A549 (cell line): ENCODE measurements at regions of chr22 and their contacts with region 1.

Region 1: DNA sequence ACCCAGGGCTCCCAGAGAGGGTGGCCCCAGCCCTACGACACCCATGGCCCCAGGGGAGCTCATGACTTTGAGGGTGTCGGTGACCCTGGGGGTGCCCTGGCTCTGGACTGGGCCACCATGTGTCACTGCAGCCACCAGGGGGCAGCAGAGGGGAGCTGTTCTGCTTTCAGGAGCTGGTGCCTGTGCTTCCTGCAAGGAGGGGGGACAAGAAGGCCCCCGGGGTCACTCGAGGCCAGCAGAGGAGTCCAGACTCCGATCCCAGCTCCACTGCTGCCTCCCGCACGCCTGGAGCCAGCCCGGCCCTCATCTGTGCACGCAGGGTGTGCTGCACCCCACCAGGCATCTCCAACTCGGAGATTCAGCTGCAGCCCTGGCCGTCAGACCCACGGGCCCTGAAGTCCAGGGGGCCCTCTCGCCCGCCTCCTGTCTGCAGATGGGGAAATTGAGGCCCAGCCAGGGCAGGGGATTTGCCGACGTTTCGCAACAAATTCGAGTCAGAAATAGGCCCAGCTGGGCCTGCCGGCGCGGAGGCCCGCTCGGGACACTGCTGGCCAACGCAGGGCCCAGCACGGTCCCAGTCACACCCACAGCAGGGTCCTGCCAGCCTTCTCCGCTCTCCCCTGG is 29.5 kb upstream of the WNT7B start:
- DNase-seq: peak; percentile 80 to 85
- ATAC-seq: peak; percentile 71 to 89
- H3K4me3 ChIP-seq: peak overlapping the region; percentile 35
- H3K27ac ChIP-seq: peak overlapping the region; percentile 94 to 99
- H3K4me1 ChIP-seq: peaks cover 31% of the 10 kb centered on the region
- CTCF ChIP-seq: peak; percentile 79
- EP300 ChIP-seq: no peak
- POLR2A ChIP-seq: no peak
- RAD21 ChIP-seq: peak; percentile 79 to 80

Region 2: GRCh38 chr22:46019351-46019750 is 12.9 kb after region 1 on chr22:
- CTCF ChIA-PET with region 1: interaction called, 38 read pairs
- POLR2A ChIA-PET with region 1: interaction called, 9 read pairs
- DNase-seq: peak in 1 of 2 experiments; percentile 38
- ATAC-seq: no peak
- H3K4me3 ChIP-seq: no peak overlapping the region
- H3K27ac ChIP-seq: peak overlapping the region; percentile 69 to 77
- H3K4me1 ChIP-seq: peaks cover 41% of the 10 kb centered on the region
- CTCF ChIP-seq: no peak
- EP300 ChIP-seq: no peak
- POLR2A ChIP-seq: no peak
- RAD21 ChIP-seq: no peak

Region 3: GRCh38 chr22:46047841-46048595 is 41.5 kb after region 1 on chr22:
- CTCF ChIA-PET with region 1: interaction called, 48 read pairs
- POLR2A ChIA-PET with region 1: no interaction called
- DNase-seq: no peak
- ATAC-seq: no peak
- H3K4me3 ChIP-seq: no peak overlapping the region
- H3K27ac ChIP-seq: no peak overlapping the region
- H3K4me1 ChIP-seq: peaks cover 12% of the 10 kb centered on the region
- CTCF ChIP-seq: no peak
- EP300 ChIP-seq: no peak
- POLR2A ChIP-seq: no peak
- RAD21 ChIP-seq: no peak

Region 4: DNA sequence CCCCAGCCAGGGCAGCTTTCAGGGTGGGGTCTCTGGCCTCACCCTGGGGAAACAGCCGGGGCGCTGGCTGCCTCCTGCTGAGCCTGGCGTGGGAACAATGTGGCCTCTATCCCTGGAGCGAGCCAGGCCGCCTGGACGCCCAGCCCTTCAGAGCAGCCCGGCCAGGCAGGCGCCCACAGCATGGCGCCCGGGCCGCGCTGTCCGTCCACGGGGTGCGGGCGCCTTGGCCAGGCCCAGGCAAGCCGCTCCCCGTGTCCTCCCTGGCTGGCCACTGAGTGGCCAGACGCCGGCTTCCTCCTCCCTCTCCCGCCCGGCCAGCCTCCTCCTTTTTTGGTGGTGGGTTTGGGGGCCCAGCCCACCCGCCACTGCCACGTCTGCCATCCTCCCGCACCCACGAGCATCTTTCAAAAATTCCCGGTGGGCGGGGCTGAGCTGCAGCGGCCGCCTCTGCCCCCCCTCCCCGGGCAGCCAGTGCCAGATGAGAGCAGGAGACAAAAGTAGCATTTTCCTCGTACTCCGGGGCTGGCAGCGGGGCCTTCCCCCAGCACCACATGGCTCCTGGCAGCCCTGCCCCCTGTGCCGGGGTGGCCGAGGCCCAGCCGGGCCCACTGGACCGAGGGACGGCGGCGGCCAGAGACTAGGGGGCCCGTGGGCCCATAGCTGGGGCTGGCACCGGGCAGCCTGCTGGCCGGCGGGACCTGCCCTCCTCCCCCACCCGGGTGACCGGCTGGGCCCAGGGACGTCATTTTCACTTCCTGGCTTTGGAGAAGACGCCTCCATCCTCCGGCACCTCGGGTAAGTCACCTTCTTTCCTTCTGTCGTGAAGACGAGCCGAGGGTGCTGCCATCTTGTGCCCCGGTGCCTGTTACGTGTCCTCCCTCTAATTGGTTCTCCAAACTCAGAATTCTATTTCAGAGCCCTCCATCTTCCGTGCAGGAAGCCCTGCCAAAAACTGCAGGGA is 73.7 kb after region 1 on chr22:
- CTCF ChIA-PET with region 1: interaction called, 18 read pairs
- POLR2A ChIA-PET with region 1: interaction called, 4 read pairs
- DNase-seq: peak in 1 of 2 experiments; percentile 93
- ATAC-seq: peak; percentile 64 to 71
- H3K4me3 ChIP-seq: peak overlapping the region; percentile 52
- H3K27ac ChIP-seq: peak overlapping the region; percentile 99 to 100
- H3K4me1 ChIP-seq: peaks cover 54% of the 10 kb centered on the region
- CTCF ChIP-seq: no peak
- EP300 ChIP-seq: no peak
- POLR2A ChIP-seq: peak; percentile 30
- RAD21 ChIP-seq: no peak

Region 5: DNA sequence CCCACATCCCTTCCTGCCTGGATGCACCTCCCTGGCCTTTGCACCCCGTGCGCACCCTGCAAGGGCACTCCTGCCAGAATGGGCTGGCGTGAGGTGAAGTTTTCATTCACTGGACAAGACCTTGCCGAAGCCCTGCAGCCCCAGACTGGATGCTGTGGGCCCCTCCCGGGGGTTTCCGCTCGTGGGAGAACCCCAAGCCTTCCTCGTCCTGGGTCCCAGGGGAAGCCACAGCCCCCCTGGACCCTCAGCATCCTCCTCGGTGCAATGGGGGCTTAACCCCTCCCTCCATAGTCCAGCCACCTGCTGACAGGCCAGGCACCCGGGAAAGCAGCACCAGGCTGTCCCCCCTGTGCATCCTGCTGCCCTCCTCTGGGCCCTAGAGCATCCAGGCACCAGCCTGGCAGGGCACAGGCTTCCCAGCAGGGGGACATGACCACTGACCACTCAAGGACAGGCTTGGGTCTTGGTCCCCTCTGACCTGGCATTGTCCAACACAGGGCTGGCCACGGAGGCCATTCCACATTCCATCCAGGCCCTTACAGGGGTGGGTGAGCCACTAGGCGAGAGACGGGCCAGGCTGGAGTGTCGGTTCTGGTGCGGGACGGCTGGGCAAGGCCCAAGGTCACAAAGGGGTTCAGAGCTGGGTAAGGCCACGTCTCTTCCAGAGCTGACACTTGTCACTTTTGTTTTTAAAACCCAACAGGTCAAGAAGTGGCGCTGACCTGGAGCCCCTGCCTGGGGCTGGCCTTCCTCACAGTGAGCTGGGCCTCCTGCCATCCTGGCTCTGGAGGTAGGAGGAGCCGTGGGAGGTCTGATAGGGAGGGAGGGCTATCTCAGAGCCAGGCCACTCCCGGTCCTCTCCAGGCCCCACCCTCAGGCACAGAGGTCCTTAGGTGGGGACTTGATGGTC is 102.3 kb after region 1 on chr22:
- CTCF ChIA-PET with region 1: interaction called, 133 read pairs
- POLR2A ChIA-PET with region 1: no interaction called
- DNase-seq: peak in 1 of 2 experiments; percentile 73
- ATAC-seq: peak; percentile 31 to 64; a peak in 4 of 6 replicates
- H3K4me3 ChIP-seq: no peak overlapping the region
- H3K27ac ChIP-seq: peak overlapping the region; percentile 93 to 98
- H3K4me1 ChIP-seq: peaks cover 99% of the 10 kb centered on the region
- CTCF ChIP-seq: no peak
- EP300 ChIP-seq: no peak
- POLR2A ChIP-seq: no peak
- RAD21 ChIP-seq: no peak

Region 6: DNA sequence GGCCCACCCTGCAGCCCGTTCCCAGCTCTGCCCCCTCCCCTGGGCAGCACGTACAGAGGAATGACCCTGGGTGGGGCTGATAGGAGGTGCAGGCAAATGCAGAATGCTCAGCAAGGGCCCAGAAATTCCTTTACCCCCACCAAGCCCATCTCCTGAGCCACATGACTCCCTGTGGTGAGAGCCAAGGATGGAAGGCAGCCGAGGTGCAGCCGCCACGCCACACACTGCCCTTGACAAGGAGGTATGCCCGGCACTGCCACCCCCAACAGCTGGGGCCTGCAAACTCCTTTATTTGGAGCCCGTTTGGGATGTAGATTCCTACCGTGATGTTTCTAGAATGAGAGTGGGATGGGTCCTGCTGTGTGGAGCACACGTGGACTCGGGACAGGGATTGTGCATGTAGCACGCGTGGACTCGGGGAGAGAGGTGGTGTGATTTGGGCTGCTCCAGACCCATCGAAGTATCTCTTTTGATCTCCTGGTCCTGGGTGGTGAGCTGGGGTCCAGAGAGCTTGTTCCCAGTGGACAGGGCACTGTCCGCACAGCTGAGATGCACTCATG is 303.1 kb after region 1 on chr22:
- CTCF ChIA-PET with region 1: interaction called, 10 read pairs
- POLR2A ChIA-PET with region 1: no interaction called
- DNase-seq: no peak
- ATAC-seq: no peak
- H3K4me3 ChIP-seq: no peak overlapping the region
- H3K27ac ChIP-seq: no peak overlapping the region
- H3K4me1 ChIP-seq: no peaks in the 10 kb centered on the region
- CTCF ChIP-seq: no peak
- EP300 ChIP-seq: no peak
- POLR2A ChIP-seq: no peak
- RAD21 ChIP-seq: no peak